IMR-90 (cell line): ENCODE measurements at regions of chr12 and their contacts with region 1.

Region 1: DNA sequence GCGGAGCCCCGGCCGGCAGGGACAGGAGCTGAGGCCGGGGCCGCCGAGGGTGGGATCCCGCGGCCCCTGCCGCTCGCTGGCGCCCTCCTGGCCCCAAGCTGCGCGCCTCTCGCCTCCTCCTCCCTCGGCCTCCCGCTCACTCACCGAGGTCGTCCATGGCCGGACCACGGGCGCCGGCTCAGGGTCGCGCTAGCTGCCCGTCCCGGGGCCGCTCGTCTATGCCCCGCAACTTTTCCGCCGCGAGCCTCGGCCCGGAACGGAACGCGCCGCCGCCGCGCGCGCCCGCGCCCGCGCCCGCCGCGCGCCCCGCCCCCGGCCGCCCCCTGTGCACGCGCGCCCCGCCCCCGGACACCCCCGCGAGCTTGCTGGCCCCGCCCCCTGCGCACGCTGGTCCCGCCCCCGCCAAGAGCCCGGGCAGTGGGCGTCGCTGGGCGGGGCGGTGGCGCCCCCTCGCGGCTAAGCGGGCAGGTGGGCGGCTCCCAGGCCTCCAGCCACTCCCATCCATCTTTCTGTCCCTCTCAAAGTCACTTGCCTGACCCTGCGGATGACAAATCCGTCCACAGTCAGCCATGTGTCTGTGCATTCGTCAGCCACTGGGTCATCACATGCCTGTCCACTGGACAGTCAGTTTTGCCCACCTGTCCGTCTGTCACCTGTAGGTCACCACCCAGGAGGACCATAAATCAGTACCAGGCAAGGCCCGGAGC is at the start of gene PXN:
- DNase-seq: peak; percentile 72
- ATAC-seq: peak; percentile 87
- H3K4me3 ChIP-seq: peak within 1 kb of the TSS; percentile 98
- H3K27ac ChIP-seq: peak within 1 kb of the TSS; percentile 97
- H3K4me1 ChIP-seq: peaks cover 19% of the 10 kb centered on the region
- H3K27me3 ChIP-seq: no peaks in the 10 kb centered on the region
- CTCF ChIP-seq: peak; percentile 91
- POLR2A ChIP-seq: 0 out of 2 replicates have a peak, but pooled peaks have one; percentile 28
- RAD21 ChIP-seq: peak; percentile 91
- total RNA-seq, gene PXN: 33.9 and 46.6 TPM in 2 replicates

Region 2: DNA sequence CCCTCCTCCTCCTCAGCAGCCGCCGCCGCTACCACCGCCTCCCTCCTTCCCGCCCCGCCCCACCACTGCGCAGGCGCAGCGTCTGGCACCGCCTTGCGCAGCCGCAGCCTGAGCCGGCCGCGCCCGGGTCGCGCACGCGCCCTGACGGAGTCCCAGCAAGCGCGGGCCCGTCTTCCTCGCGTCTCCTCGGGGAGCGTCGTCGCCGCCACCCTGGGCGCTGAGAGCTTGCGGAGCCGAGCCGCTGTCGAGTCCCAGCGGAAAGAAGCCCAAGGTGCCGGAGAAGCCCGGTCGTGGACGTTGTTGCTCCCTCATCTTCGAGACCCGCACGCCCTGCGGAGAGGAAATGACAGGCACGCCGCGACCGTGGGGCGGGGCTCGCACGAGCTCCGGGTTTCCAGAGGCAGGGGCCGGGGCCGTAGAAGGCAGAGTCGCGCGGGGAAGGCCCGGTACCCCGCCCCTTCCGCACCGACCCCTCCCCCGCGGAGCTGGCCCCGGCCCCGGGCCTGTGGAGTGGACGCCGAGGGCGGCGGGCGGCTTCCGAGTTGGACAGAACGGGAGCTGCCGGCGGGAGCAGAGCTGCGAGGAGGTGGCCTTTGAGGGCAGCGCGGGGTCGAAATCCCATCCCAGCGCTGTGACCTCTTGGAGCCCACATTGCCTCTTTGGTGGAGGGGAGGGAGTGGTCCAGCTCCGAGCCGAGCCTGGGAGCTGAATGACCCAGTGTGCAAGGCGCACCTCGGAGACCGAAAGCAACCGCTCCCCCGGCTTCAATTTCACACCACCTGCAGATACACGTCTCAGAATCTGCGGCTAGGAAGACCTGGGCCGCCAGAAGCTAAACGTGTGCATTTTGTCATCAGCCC is 148.6 kb before region 1 on chr12:
- CTCF ChIA-PET with region 1: no interaction called
- POLR2A ChIA-PET with region 1: no interaction called
- dilution Hi-C with region 1: no loop called
- in situ Hi-C with region 1: no loop called
- intact Hi-C with region 1: no loop called
- DNase-seq: peak; percentile 90
- ATAC-seq: peak; percentile 75
- H3K4me3 ChIP-seq: peak overlapping the region; percentile 95
- H3K27ac ChIP-seq: peak overlapping the region; percentile 98
- H3K4me1 ChIP-seq: peaks cover 23% of the 10 kb centered on the region
- H3K27me3 ChIP-seq: no peaks in the 10 kb centered on the region
- CTCF ChIP-seq: no peak
- POLR2A ChIP-seq: 0 out of 2 replicates have a peak, but pooled peaks have one; percentile 43
- RAD21 ChIP-seq: no peak

Region 3: DNA sequence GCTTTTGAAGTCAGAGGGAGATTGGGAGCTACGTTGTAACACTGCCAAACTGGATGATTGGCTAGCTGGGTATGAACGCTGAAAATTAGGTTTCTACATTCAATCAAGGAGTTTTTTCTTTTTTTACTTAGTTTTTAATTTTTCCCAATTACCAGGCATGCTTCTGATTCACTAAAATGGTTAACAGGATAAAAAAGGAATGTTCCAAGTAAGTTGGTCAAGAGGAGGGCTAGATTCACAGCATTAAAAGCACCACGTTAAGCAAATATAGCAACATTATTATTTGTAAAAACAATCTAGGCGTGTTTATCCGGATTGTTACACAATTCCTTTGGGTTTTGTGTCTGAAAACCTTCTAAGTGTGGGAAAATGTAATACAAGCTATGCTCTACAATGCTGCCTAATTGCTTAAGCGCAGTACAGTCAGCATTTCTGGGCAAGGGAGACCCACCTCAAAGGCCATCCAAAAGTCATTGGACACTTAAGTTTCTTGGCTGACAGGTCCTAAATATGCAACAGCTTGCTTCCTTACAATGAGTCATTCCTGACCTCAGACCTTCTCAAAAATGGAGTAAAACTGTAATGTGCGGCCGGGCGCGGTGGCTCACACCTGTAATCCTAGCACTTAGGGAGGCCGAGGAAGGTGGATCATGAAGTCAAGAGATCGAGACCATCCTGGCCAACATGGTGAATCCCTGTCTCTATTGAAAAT is 65.9 kb before region 1 on chr12:
- CTCF ChIA-PET with region 1: interaction called, 11 read pairs
- POLR2A ChIA-PET with region 1: interaction called, 19 read pairs
- dilution Hi-C with region 1: no loop called
- in situ Hi-C with region 1: no loop called
- intact Hi-C with region 1: loop called (anchors 2 kb)
- DNase-seq: peak; percentile 77
- ATAC-seq: no peak
- H3K4me3 ChIP-seq: peak overlapping the region; percentile 57
- H3K27ac ChIP-seq: peak overlapping the region; percentile 57
- H3K4me1 ChIP-seq: peaks cover 8% of the 10 kb centered on the region
- H3K27me3 ChIP-seq: no peaks in the 10 kb centered on the region
- CTCF ChIP-seq: no peak
- POLR2A ChIP-seq: peak; percentile 52; the same call in 1 of the 2 replicates
- RAD21 ChIP-seq: no peak

Region 4: DNA sequence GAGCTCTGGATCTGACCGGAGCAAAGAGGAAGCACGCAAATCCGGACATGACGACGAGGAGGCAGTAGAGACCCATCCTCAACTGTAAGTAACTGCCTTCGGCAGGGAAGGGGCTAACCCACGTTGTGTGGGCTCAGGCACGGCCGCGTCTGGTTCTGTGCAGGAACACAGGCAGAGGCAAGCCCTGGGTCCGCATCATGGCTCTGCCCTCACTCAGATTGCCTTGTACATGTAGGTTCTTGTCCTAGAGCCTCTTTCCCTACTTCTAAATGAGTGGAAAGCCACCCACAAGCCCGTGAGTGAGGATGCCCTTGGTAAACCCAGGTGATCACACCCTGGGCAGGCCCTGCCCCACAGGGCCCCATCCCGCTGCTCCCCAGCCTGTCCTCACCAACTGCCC is 55.8 kb before region 1 on chr12:
- CTCF ChIA-PET with region 1: interaction called, 4 read pairs
- POLR2A ChIA-PET with region 1: interaction called, 19 read pairs
- dilution Hi-C with region 1: no loop called
- in situ Hi-C with region 1: no loop called
- intact Hi-C with region 1: no loop called
- DNase-seq: no peak
- ATAC-seq: no peak
- H3K4me3 ChIP-seq: no peak overlapping the region
- H3K27ac ChIP-seq: no peak overlapping the region
- H3K4me1 ChIP-seq: no peaks in the 10 kb centered on the region
- H3K27me3 ChIP-seq: no peaks in the 10 kb centered on the region
- CTCF ChIP-seq: no peak
- POLR2A ChIP-seq: no peak
- RAD21 ChIP-seq: no peak

Region 5: GRCh38 chr12:120234643-120235368 is 30.8 kb before region 1 on chr12:
- CTCF ChIA-PET with region 1: interaction called, 116 read pairs
- POLR2A ChIA-PET with region 1: interaction called, 39 read pairs
- dilution Hi-C with region 1: no loop called
- in situ Hi-C with region 1: no loop called
- intact Hi-C with region 1: no loop called
- DNase-seq: peak; percentile 97
- ATAC-seq: peak; percentile 52
- H3K4me3 ChIP-seq: no peak overlapping the region
- H3K27ac ChIP-seq: peak overlapping the region; percentile 92
- H3K4me1 ChIP-seq: peaks cover 70% of the 10 kb centered on the region
- H3K27me3 ChIP-seq: no peaks in the 10 kb centered on the region
- CTCF ChIP-seq: peak; percentile 63
- POLR2A ChIP-seq: no peak; the same call in 1 of the 2 replicates
- RAD21 ChIP-seq: peak; percentile 60

Region 6: DNA sequence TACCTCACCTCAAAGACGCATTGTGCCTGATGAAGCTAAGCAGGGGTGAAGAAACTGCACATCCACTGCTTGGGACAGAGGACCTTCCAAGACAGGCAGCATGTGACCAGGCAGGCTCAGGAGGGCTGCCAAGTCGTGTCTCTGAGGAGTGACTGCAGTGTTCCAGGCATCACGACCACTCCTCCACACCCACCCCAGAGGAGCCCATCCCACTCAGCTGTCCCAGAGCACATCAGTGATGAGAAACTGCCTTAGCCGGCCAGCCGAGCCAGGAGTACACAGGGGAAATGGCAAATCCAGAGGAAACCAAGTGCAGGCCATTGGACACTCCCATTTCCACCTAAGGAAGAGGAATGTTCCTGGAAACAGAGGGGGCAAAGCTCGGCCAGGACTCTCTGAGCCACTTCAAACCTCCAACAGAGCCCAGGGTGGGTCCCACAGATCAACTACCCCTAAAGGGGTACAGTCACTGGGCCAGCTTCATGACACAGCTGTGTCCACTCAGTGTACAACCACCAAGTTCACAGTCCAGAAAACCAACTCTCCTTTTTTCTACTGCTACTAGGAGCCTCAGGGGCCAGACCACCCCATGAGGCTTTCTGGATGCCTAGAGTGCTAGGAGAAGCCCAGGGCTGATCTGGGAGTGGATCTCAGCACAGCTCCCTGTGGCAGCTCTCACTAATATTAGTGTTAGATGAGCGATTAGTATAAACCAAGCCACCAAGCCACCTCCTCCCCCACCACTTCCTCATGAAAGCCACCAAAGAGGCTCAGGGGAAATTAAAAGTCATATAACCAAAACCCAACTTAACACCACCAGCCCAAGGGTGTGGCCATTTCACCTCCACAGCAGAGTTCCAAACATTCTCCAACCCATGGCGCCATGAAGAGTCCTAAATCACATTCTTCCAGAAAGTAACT is 15.5 kb before region 1 on chr12:
- CTCF ChIA-PET with region 1: no interaction called
- POLR2A ChIA-PET with region 1: interaction called, 17 read pairs
- dilution Hi-C with region 1: no loop called
- in situ Hi-C with region 1: no loop called
- intact Hi-C with region 1: no loop called
- DNase-seq: no peak
- ATAC-seq: peak; percentile 31
- H3K4me3 ChIP-seq: no peak overlapping the region
- H3K27ac ChIP-seq: peak overlapping the region; percentile 45
- H3K4me1 ChIP-seq: peaks cover 34% of the 10 kb centered on the region
- H3K27me3 ChIP-seq: no peaks in the 10 kb centered on the region
- CTCF ChIP-seq: no peak
- POLR2A ChIP-seq: no peak
- RAD21 ChIP-seq: no peak

Region 7: DNA sequence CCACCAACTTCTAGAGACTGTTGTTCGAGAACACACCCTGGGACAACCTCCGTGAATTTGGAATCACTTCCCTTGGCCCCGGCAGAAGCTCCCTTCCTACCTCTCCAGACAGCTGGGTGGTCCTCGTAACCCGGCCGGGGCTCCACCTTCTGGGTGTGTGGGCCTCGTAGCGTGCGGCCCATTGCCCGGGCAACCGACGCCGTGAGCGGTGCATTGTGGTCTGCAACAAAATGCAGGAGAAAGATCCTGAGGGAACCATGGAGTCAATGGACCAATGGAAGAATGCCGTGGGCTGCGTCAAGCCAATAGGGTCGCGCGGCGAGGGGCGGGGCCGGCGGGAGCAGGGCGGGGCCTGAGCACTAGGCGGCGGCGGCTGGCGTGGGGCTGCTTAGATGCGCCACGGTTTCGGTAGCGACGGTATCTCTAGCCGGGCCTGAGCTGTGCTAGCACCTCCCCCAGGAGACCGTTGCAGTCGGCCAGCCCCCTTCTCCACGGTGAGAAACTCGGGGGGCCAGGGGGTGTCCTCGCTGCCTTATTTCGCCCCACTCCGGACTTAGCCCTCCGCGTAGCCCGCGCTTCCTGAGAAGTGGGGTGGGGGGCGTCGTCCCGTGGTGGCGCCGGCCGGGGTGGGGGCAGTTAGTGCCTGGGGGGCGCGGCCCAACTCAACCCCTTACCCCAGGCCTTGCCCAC is 230.2 kb after region 1 on chr12 and contains the start of gene DYNLL1:
- CTCF ChIA-PET with region 1: no interaction called
- POLR2A ChIA-PET with region 1: no interaction called
- dilution Hi-C with region 1: no loop called
- in situ Hi-C with region 1: no loop called
- intact Hi-C with region 1: no loop called
- DNase-seq: peak; percentile 94
- ATAC-seq: peak; percentile 97
- H3K4me3 ChIP-seq: peak within 1 kb of the TSS; percentile 76
- H3K27ac ChIP-seq: peak within 1 kb of the TSS; percentile 78
- H3K4me1 ChIP-seq: peaks cover 1% of the 10 kb centered on the region
- H3K27me3 ChIP-seq: no peaks in the 10 kb centered on the region
- CTCF ChIP-seq: no peak
- POLR2A ChIP-seq: peak; percentile 95
- RAD21 ChIP-seq: no peak
- total RNA-seq, gene DYNLL1: 696 and 709 TPM in 2 replicates

Region 8: GRCh38 chr12:122159882-122160281 is 1894.3 kb after region 1 on chr12:
- CTCF ChIA-PET with region 1: no interaction called
- POLR2A ChIA-PET with region 1: interaction called, 15 read pairs
- dilution Hi-C with region 1: no loop called
- in situ Hi-C with region 1: no loop called
- intact Hi-C with region 1: no loop called
- DNase-seq: no peak
- ATAC-seq: no peak
- H3K4me3 ChIP-seq: no peak overlapping the region
- H3K27ac ChIP-seq: no peak overlapping the region
- H3K4me1 ChIP-seq: no peaks in the 10 kb centered on the region
- H3K27me3 ChIP-seq: peaks cover 7% of the 10 kb centered on the region
- CTCF ChIP-seq: no peak
- POLR2A ChIP-seq: no peak
- RAD21 ChIP-seq: no peak